CD8-positive, alpha-beta T cell (primary cell): ENCODE measurements at regions of chr4 and their contacts with region 1.

Region 1: DNA sequence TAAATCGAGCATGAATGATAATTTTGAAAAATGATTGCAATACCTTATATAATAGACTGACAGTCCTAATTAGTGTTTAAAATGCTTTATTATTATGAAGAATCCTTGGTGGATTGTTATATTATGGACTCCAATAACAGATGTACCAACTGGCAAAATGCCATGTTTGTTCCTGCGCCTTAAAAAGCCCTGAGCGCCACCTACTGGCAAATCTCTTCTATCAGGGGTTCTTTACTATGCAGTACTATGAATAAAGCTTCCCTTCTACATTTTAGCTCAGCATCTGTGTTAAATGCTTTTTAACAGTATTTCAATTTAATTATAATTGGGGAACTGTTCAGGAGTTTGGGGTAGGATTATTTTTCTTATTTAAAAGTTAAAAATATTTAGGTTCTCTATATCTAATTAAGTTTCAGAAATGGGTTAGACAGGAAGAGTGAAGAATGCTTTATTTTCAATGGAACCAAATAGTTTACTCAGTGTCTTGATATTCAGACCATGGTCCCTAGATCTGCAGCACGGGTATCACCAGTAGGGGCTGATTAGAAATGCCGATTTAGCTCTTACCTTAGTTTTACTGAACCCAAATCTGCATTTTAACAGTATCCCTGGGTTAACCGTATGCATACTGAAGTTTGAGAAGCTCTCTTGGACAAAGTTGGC is 20.1 kb downstream of the CFAP97 start:
- DNase-seq: peak; percentile 40 to 90 (median 78)
- ATAC-seq: peak; percentile 75
- H3K4me3 ChIP-seq: no peak overlapping the region
- H3K4me3 Mint-ChIP-seq: no peak overlapping the region
- H3K27ac ChIP-seq: no peak overlapping the region
- H3K27ac Mint-ChIP-seq: no peak overlapping the region
- H3K4me1 ChIP-seq: peaks cover 4% of the 10 kb centered on the region
- H3K4me1 Mint-ChIP-seq: peaks cover 36% of the 10 kb centered on the region
- H3K27me3 ChIP-seq: no peaks in the 10 kb centered on the region
- H3K27me3 Mint-ChIP-seq: no peaks in the 10 kb centered on the region
- CTCF ChIP-seq: peak; percentile 95

Region 2: GRCh38 chr4:185005216-185005819 is 178.4 kb before region 1 on chr4:
- CTCF ChIA-PET with region 1: interaction called, 3 read pairs
- POLR2A ChIA-PET with region 1: no interaction called
- intact Hi-C with region 1: loop called (anchors 1 to 10 kb)
- DNase-seq: peak; percentile 50 to 82 (median 76)
- ATAC-seq: peak; percentile 96
- H3K4me3 ChIP-seq: no peak overlapping the region
- H3K4me3 Mint-ChIP-seq: peak overlapping the region; percentile 50
- H3K27ac ChIP-seq: no peak overlapping the region
- H3K27ac Mint-ChIP-seq: no peak overlapping the region
- H3K4me1 ChIP-seq: no peaks in the 10 kb centered on the region
- H3K4me1 Mint-ChIP-seq: peaks cover 4% of the 10 kb centered on the region
- H3K27me3 ChIP-seq: peaks cover 2 to 6% of the 10 kb centered on the region in 2 experiments
- H3K27me3 Mint-ChIP-seq: peaks cover 51% of the 10 kb centered on the region
- CTCF ChIP-seq: peak; percentile 88

Region 3: GRCh38 chr4:185039508-185040273 is 144.1 kb before region 1 on chr4:
- CTCF ChIA-PET with region 1: interaction called, 84 read pairs
- POLR2A ChIA-PET with region 1: no interaction called
- intact Hi-C with region 1: loop called (anchors 1 kb)
- DNase-seq: peak; percentile 9 to 72 (median 47)
- ATAC-seq: peak; percentile 77
- H3K4me3 ChIP-seq: no peak overlapping the region
- H3K4me3 Mint-ChIP-seq: peak overlapping the region; percentile 44
- H3K27ac ChIP-seq: no peak overlapping the region
- H3K27ac Mint-ChIP-seq: no peak overlapping the region
- H3K4me1 ChIP-seq: peaks cover 6% of the 10 kb centered on the region
- H3K4me1 Mint-ChIP-seq: peaks cover 4% of the 10 kb centered on the region
- H3K27me3 ChIP-seq: no peaks in the 10 kb centered on the region
- H3K27me3 Mint-ChIP-seq: peaks cover 16% of the 10 kb centered on the region
- CTCF ChIP-seq: peak; percentile 86

Region 4: DNA sequence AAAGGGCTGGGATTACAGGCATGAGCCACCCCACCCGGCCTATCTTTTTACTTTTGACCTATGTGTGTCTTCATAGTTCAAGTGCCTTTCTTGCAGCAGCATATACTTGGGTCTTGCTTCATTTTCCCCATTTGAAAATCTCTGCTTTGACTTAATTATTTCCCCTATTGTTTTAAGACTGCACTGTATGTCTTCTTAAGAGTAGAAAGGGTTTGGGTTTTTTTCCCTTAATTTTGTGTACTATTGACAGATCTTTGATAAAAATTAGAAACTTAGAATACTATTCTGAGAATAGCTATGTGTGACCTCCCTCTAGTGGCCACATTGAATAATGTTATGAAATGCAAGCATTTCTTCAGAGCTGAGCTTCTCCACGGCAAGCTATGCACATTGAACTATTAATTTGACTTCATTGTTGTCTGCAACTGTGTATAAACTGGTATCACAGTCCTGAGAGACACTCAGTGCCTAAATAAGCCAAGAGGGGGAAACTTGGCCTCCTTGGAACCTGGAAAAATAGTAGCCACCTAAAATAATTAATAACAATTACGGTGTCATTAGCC is 49.4 kb before region 1 on chr4:
- CTCF ChIA-PET with region 1: interaction called, 9 read pairs
- POLR2A ChIA-PET with region 1: no interaction called
- intact Hi-C with region 1: loop called in 1 of 2 experiments (anchors 1 kb)
- DNase-seq: peak in 2 of 9 experiments; percentile 61 to 68
- ATAC-seq: peak; percentile 87
- H3K4me3 ChIP-seq: no peak overlapping the region
- H3K4me3 Mint-ChIP-seq: no peak overlapping the region
- H3K27ac ChIP-seq: no peak overlapping the region
- H3K27ac Mint-ChIP-seq: no peak overlapping the region
- H3K4me1 ChIP-seq: no peaks in the 10 kb centered on the region
- H3K4me1 Mint-ChIP-seq: no peaks in the 10 kb centered on the region
- H3K27me3 ChIP-seq: peaks cover 0 to 5% of the 10 kb centered on the region in 2 experiments
- H3K27me3 Mint-ChIP-seq: peaks cover 37% of the 10 kb centered on the region
- CTCF ChIP-seq: peak; percentile 86

Region 5: GRCh38 chr4:185149392-185149791 is 34.4 kb before region 1 on chr4:
- CTCF ChIA-PET with region 1: interaction called, 11 read pairs
- POLR2A ChIA-PET with region 1: no interaction called
- intact Hi-C with region 1: no loop called
- DNase-seq: no peak
- ATAC-seq: no peak
- H3K4me3 ChIP-seq: no peak overlapping the region
- H3K4me3 Mint-ChIP-seq: no peak overlapping the region
- H3K27ac ChIP-seq: no peak overlapping the region
- H3K27ac Mint-ChIP-seq: no peak overlapping the region
- H3K4me1 ChIP-seq: no peaks in the 10 kb centered on the region
- H3K4me1 Mint-ChIP-seq: peaks cover 8% of the 10 kb centered on the region
- H3K27me3 ChIP-seq: no peaks in the 10 kb centered on the region
- H3K27me3 Mint-ChIP-seq: no peaks in the 10 kb centered on the region
- CTCF ChIP-seq: no peak

Region 6: DNA sequence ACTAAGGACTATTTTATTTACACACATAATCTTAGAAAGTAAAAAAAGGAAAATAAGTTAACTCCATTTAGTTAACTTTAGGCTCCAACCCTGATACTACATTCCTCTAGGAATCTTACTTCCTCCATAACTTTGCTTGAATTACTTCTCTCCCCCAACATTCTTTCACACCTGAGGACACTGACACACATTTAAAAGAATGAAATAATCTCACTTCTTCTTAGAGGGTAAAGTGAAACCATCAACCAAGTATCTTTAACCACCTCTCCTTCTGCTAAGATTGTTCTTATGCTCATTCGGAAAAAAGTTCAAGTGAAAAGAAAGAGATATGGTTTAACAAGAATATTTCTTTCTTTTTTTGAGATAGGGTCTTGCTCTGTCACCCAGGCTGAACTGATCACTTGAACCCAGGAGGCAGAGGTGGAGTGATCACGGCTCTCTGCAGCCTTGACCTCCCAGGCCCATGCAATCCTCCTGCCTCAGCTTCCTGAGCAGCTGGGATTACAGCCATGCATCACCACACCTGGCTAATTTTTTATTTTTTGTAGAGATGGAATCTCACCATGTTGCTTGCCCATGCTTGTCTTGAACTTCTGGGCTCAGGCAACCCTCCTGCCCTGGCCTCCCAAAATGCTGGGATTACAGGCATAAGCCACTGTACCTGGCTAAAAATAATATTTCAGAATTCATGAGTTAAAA is 12.2 kb before region 1 on chr4:
- CTCF ChIA-PET with region 1: interaction called, 14 read pairs
- POLR2A ChIA-PET with region 1: no interaction called
- intact Hi-C with region 1: no loop called
- DNase-seq: no peak
- ATAC-seq: no peak
- H3K4me3 ChIP-seq: no peak overlapping the region
- H3K4me3 Mint-ChIP-seq: no peak overlapping the region
- H3K27ac ChIP-seq: no peak overlapping the region
- H3K27ac Mint-ChIP-seq: no peak overlapping the region
- H3K4me1 ChIP-seq: peaks cover 2% of the 10 kb centered on the region
- H3K4me1 Mint-ChIP-seq: peaks cover 4% of the 10 kb centered on the region
- H3K27me3 ChIP-seq: no peaks in the 10 kb centered on the region
- H3K27me3 Mint-ChIP-seq: peaks cover 3% of the 10 kb centered on the region
- CTCF ChIP-seq: no peak

Region 7: DNA sequence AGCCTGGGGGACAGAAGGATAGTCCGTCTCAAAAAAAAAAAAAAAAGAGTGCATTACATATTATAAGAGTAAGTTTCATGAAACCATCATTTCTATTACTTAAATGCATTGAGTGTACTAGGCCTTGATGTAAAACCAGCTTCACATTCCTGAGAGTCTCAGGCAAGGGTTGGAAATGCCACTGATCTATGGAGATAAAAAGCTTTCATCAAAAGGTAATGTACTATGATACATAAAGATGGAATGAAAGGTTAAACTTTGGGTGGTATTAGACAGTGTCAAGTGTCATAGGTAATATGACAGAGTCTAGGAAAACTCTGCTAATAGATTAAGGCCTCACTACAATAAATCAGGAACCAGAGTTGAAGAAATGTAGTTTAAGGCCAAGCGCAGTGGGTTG is 12.7 kb after region 1 on chr4:
- CTCF ChIA-PET with region 1: interaction called, 12 read pairs
- POLR2A ChIA-PET with region 1: no interaction called
- intact Hi-C with region 1: no loop called
- DNase-seq: no peak
- ATAC-seq: no peak
- H3K4me3 ChIP-seq: no peak overlapping the region
- H3K4me3 Mint-ChIP-seq: no peak overlapping the region
- H3K27ac ChIP-seq: no peak overlapping the region
- H3K27ac Mint-ChIP-seq: no peak overlapping the region
- H3K4me1 ChIP-seq: no peaks in the 10 kb centered on the region
- H3K4me1 Mint-ChIP-seq: peaks cover 36% of the 10 kb centered on the region
- H3K27me3 ChIP-seq: no peaks in the 10 kb centered on the region
- H3K27me3 Mint-ChIP-seq: no peaks in the 10 kb centered on the region
- CTCF ChIP-seq: no peak

Region 8: GRCh38 chr4:185282968-185283367 is 99.2 kb after region 1 on chr4:
- CTCF ChIA-PET with region 1: no interaction called
- POLR2A ChIA-PET with region 1: no interaction called
- intact Hi-C with region 1: no loop called
- DNase-seq: no peak
- ATAC-seq: no peak
- H3K4me3 ChIP-seq: no peak overlapping the region
- H3K4me3 Mint-ChIP-seq: no peak overlapping the region
- H3K27ac ChIP-seq: no peak overlapping the region
- H3K27ac Mint-ChIP-seq: no peak overlapping the region
- H3K4me1 ChIP-seq: no peaks in the 10 kb centered on the region
- H3K4me1 Mint-ChIP-seq: peaks cover 5% of the 10 kb centered on the region
- H3K27me3 ChIP-seq: no peaks in the 10 kb centered on the region
- H3K27me3 Mint-ChIP-seq: no peaks in the 10 kb centered on the region
- CTCF ChIP-seq: no peak

Region 9: GRCh38 chr4:185554365-185555126 is 370.8 kb after region 1 on chr4:
- CTCF ChIA-PET with region 1: no interaction called
- POLR2A ChIA-PET with region 1: no interaction called
- intact Hi-C with region 1: no loop called
- DNase-seq: no peak
- ATAC-seq: no peak
- H3K4me3 ChIP-seq: no peak overlapping the region
- H3K4me3 Mint-ChIP-seq: no peak overlapping the region
- H3K27ac ChIP-seq: no peak overlapping the region
- H3K27ac Mint-ChIP-seq: no peak overlapping the region
- H3K4me1 ChIP-seq: no peaks in the 10 kb centered on the region
- H3K4me1 Mint-ChIP-seq: no peaks in the 10 kb centered on the region
- H3K27me3 ChIP-seq: no peaks in the 10 kb centered on the region
- H3K27me3 Mint-ChIP-seq: peaks cover 20% of the 10 kb centered on the region
- CTCF ChIP-seq: no peak